Activated T-helper 1 cell treated with anti-CD3 and anti-CD28 coated beads, Interleukin-12 subunit alpha, Interleukin-12 subunit beta, Interleukin-2, Interleukin-4 antibody, amounts not matched to agents 30 ng/mL and 10 ng/mL and 1 ng/mL, durations not matched to agents 14 hours and 24 hours and 36 hours (primary cell): ENCODE measurements at regions of chr16 and their contacts with region 1.

Region 1: DNA sequence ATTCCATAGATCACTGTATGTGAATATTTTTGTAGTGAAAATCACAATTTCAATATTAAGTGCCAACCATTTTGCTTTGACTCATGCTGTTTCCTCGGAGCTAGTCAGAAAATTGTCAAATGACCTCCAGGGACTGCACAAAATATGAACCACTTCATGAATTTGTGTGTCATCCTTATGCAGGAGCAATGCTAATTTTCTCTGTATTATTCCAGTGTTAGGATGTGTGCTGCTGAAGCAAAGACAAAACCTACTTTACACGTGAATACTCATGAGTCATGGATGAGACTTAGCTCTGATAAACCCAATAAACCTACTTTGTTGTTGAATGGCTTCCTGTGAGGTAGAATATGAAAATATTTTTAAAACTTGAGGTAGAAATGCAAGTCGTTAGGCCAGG is 65.2 kb downstream of the SHCBP1 start:
- DNase-seq: no peak
- H3K4me3 Mint-ChIP-seq: no peak overlapping the region
- H3K27ac Mint-ChIP-seq: no peak overlapping the region
- H3K4me1 Mint-ChIP-seq: no peaks in the 10 kb centered on the region
- H3K27me3 Mint-ChIP-seq: peaks cover 3% of the 10 kb centered on the region

Region 2: GRCh38 chr16:46607529-46607928 is 51.6 kb after region 1 on chr16:
- intact Hi-C with region 1: loop called (anchors 1 kb)
- DNase-seq: no peak
- H3K4me3 Mint-ChIP-seq: no peak overlapping the region
- H3K27ac Mint-ChIP-seq: no peak overlapping the region
- H3K4me1 Mint-ChIP-seq: no peaks in the 10 kb centered on the region
- H3K27me3 Mint-ChIP-seq: no peaks in the 10 kb centered on the region

Region 3: DNA sequence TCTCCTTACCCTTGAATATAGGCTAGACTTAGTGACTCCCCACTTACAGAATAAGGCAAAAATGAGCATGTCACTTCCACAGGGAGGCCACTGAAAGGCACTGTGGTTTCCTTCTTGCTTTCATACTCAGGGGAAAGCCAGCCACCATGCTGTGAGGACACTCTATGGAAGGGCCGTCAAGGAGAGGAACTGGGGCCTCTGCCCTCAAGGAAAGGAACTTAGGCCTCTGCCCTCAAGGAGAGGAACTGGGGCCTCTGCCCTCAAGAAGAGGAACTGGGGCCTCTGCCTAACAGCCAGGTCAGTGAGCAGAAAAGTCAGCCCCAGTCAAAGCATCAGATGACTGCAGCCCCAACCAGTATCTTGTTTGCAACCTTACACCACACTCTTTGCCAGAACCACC is 103.0 kb after region 1 on chr16:
- intact Hi-C with region 1: loop called (anchors 1 kb)
- DNase-seq: peak; percentile 11
- H3K4me3 Mint-ChIP-seq: no peak overlapping the region
- H3K27ac Mint-ChIP-seq: peak overlapping the region; percentile 70
- H3K4me1 Mint-ChIP-seq: peaks cover 17% of the 10 kb centered on the region
- H3K27me3 Mint-ChIP-seq: no peaks in the 10 kb centered on the region

Region 4: GRCh38 chr16:46929378-46930332 is 373.7 kb after region 1 on chr16:
- intact Hi-C with region 1: loop called (anchors 1 kb)
- DNase-seq: peak; percentile 62
- H3K4me3 Mint-ChIP-seq: no peak overlapping the region
- H3K27ac Mint-ChIP-seq: no peak overlapping the region
- H3K4me1 Mint-ChIP-seq: peaks cover 11% of the 10 kb centered on the region
- H3K27me3 Mint-ChIP-seq: no peaks in the 10 kb centered on the region

Region 5: GRCh38 chr16:48164907-48165726 is 1609.2 kb after region 1 on chr16:
- intact Hi-C with region 1: loop called (anchors 10 kb)
- DNase-seq: peak; percentile 59
- H3K4me3 Mint-ChIP-seq: no peak overlapping the region
- H3K27ac Mint-ChIP-seq: peak overlapping the region; percentile 21
- H3K4me1 Mint-ChIP-seq: peaks cover 23% of the 10 kb centered on the region
- H3K27me3 Mint-ChIP-seq: peaks cover 6% of the 10 kb centered on the region